Activated CD4-positive, alpha-beta memory T cell treated with anti-CD3 and anti-CD28 coated beads, Interleukin-2, amount 10 ng/mL, durations not matched to agents 7 days and 5 days (primary cell): ENCODE measurements at regions of chr5 and their contacts with region 1.

Region 1: DNA sequence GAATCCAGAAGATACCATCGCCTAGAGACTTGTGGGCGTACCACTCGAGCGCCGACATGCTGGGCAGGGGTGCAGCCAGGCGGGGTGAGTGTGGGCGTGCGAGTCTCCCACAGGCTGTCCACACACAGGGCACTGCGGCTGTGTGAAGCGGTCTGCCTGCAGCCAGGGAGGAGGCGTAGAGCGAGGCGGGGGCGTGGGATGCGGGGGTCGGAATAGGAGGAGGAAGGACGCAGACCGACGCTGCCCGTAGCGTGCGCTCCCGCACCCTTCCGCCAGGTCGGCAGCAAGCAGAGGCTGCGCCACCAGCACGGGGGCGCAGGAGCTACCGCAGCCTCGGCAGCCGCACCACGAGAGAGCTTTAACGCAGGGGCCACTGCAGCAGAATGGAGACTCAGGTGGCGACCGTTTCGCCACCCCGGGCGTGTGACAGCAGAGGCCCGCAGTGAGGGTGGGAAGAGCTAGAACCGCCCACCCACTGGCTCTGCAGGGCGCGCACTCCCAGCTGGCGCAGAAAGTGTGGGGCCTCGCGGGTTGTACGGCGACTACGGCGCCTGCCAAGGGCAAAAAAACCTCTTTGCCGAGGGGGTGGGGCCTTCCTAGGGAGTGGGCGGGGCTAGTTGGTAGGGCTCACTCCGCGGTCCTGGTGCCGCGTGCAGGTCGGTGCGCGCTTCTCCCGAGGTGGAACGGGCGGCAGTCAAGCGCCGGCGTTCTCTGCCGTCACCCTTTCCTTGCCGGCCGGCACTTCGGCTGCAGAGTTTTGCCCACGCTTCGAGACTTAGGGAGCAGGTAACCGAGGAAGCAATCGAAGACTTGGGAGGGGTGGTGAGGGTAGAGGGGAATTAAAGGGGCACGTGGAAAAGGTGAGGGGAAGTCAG is at the starts of genes MBLAC2 and POLR3G:
- DNase-seq: peak; percentile 94
- H3K4me3 Mint-ChIP-seq: peak within 1 kb of the TSS; percentile 89
- H3K27ac Mint-ChIP-seq: peak within 1 kb of the TSS; percentile 89
- H3K4me1 Mint-ChIP-seq: peaks cover 27% of the 10 kb centered on the region
- H3K27me3 Mint-ChIP-seq: no peaks in the 10 kb centered on the region
- total RNA-seq, gene MBLAC2: 3.9 to 4.9 TPM
- total RNA-seq, gene POLR3G: 2.8 to 4.2 TPM

Region 2: DNA sequence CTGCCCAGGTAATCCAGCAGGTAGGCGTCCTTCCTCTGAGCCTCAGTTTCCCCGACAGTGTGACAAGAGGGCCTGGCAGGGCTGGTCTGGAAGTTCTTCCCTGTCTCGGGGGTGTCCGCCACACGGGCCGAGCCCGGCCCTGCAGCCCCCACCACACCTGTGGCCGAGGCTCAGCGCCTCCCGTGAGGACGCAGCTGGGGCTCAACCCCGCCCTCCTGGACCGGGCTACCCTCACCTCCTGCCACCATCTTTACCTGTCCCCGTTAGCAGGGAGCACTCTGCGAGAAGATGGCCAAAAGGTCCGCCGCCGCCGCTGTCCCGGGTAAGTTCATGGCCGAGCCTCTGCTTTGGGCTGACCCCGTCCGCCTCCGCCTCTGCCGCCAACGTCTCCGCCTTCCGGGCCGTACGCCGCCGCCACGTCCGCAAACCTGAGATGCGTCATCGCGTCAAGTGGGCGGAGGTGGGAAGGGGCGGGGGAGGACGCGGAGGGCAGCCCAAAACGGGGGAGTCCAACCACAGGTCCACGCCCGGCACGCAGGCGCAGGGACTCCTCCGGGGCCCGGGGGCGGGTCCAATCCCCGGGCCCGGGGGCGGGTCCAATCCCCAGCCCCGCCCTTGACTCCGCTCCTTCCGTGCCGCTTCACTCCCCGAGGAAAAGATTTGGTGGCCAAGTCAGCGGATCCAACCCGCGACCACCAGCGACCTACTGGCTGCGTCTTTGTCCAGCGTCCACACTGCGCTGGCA is 54.9 kb after region 1 on chr5 and contains the start of gene LYSMD3:
- CTCF ChIA-PET with region 1: interaction called, 10 read pairs
- POLR2A ChIA-PET with region 1: interaction called, 24 read pairs
- DNase-seq: peak; percentile 98
- H3K4me3 Mint-ChIP-seq: peak within 1 kb of the TSS; percentile 87
- H3K27ac Mint-ChIP-seq: peak within 1 kb of the TSS; percentile 87
- H3K4me1 Mint-ChIP-seq: peaks cover 27% of the 10 kb centered on the region
- H3K27me3 Mint-ChIP-seq: peaks cover 22% of the 10 kb centered on the region
- total RNA-seq, gene LYSMD3: 20.6 to 22.5 TPM